ENCODE measurements at regions of chr1 and their contacts with region 1.

Region 1: GRCh38 chr1:211323156-211324063 is 3.2 kb upstream of the TRAF5 start:
- DNase-seq: peak; percentile 65 to 68
- H3K4me3 ChIP-seq: no peak overlapping the region
- H3K4me3 Mint-ChIP-seq: no peak overlapping the region
- H3K27ac Mint-ChIP-seq: no peak overlapping the region
- H3K4me1 ChIP-seq: no peaks in the 10 kb centered on the region; the same call in 1 of the 2 replicates
- H3K4me1 Mint-ChIP-seq: no peaks in the 10 kb centered on the region
- H3K27me3 ChIP-seq: no peaks in the 10 kb centered on the region
- H3K27me3 Mint-ChIP-seq: no peaks in the 10 kb centered on the region
- CTCF ChIP-seq: peak; percentile 73 to 84

Region 2: DNA sequence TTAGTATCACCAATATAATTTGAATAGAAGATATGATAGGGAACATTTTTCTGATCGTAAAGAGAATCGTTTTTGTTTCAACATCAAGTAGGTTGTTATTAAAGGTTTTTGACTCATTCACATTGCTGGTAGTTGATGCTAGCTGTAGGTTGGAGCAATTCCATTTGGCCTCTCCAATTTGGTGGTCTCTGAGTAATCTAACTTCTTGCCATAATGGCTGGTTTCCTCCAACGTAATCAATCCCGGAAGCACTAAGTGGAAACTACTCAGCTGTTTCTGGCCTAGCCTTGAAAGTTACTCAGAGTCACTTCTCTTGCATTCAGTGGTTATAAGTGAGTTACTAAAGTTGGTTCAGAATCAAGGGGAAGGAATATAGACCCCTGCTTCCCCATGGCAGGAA is 38.2 kb before region 1 on chr1:
- CTCF ChIA-PET with region 1: no interaction called
- POLR2A ChIA-PET with region 1: no interaction called
- intact Hi-C with region 1: no loop called
- DNase-seq: no peak
- H3K4me3 ChIP-seq: no peak overlapping the region
- H3K4me3 Mint-ChIP-seq: no peak overlapping the region
- H3K27ac Mint-ChIP-seq: no peak overlapping the region
- H3K4me1 ChIP-seq: no peaks in the 10 kb centered on the region
- H3K4me1 Mint-ChIP-seq: no peaks in the 10 kb centered on the region
- H3K27me3 ChIP-seq: no peaks in the 10 kb centered on the region
- H3K27me3 Mint-ChIP-seq: no peaks in the 10 kb centered on the region
- CTCF ChIP-seq: no peak

Region 3: GRCh38 chr1:211352985-211353515 is 29.6 kb after region 1 on chr1:
- CTCF ChIA-PET with region 1: no interaction called
- POLR2A ChIA-PET with region 1: no interaction called
- intact Hi-C with region 1: loop called (anchors 1 kb)
- DNase-seq: peak; percentile 48 to 72
- H3K4me3 ChIP-seq: no peak overlapping the region
- H3K4me3 Mint-ChIP-seq: no peak overlapping the region
- H3K27ac Mint-ChIP-seq: no peak overlapping the region
- H3K4me1 ChIP-seq: no peaks in the 10 kb centered on the region
- H3K4me1 Mint-ChIP-seq: no peaks in the 10 kb centered on the region
- H3K27me3 ChIP-seq: no peaks in the 10 kb centered on the region
- H3K27me3 Mint-ChIP-seq: no peaks in the 10 kb centered on the region
- CTCF ChIP-seq: peak; percentile 66 to 83

Region 4: GRCh38 chr1:211382714-211383480 is 59.5 kb after region 1 on chr1:
- CTCF ChIA-PET with region 1: interaction called, 4 read pairs
- POLR2A ChIA-PET with region 1: no interaction called
- intact Hi-C with region 1: loop called (anchors 2 kb)
- DNase-seq: peak; percentile 93 to 94
- H3K4me3 ChIP-seq: peak overlapping the region; percentile 58
- H3K4me3 Mint-ChIP-seq: peak overlapping the region; percentile 95
- H3K27ac Mint-ChIP-seq: peak overlapping the region; percentile 100
- H3K4me1 ChIP-seq: no peaks in the 10 kb centered on the region
- H3K4me1 Mint-ChIP-seq: peaks cover 14% of the 10 kb centered on the region
- H3K27me3 ChIP-seq: no peaks in the 10 kb centered on the region
- H3K27me3 Mint-ChIP-seq: no peaks in the 10 kb centered on the region
- CTCF ChIP-seq: no peak

Region 5: GRCh38 chr1:211476200-211476849 is 152.9 kb after region 1 on chr1:
- CTCF ChIA-PET with region 1: interaction called, 6 read pairs
- POLR2A ChIA-PET with region 1: no interaction called
- intact Hi-C with region 1: loop called (anchors 1 kb)
- DNase-seq: peak; percentile 78 to 81
- H3K4me3 ChIP-seq: no peak overlapping the region
- H3K4me3 Mint-ChIP-seq: no peak overlapping the region
- H3K27ac Mint-ChIP-seq: no peak overlapping the region
- H3K4me1 ChIP-seq: no peaks in the 10 kb centered on the region
- H3K4me1 Mint-ChIP-seq: no peaks in the 10 kb centered on the region
- H3K27me3 ChIP-seq: peaks cover 2% of the 10 kb centered on the region; the same call in 1 of the 2 replicates
- H3K27me3 Mint-ChIP-seq: peaks cover 3% of the 10 kb centered on the region
- CTCF ChIP-seq: peak; percentile 77 to 92

Region 6: GRCh38 chr1:211654838-211655787 is 331.7 kb after region 1 on chr1:
- CTCF ChIA-PET with region 1: no interaction called
- POLR2A ChIA-PET with region 1: no interaction called
- intact Hi-C with region 1: loop called (anchors 1 kb)
- DNase-seq: peak; percentile 84 to 89
- H3K4me3 ChIP-seq: no peak overlapping the region
- H3K4me3 Mint-ChIP-seq: no peak overlapping the region
- H3K27ac Mint-ChIP-seq: no peak overlapping the region
- H3K4me1 ChIP-seq: peaks cover 21% of the 10 kb centered on the region
- H3K4me1 Mint-ChIP-seq: peaks cover 22% of the 10 kb centered on the region
- H3K27me3 ChIP-seq: no peaks in the 10 kb centered on the region
- H3K27me3 Mint-ChIP-seq: no peaks in the 10 kb centered on the region
- CTCF ChIP-seq: peak; percentile 90 to 91

Region 7: DNA sequence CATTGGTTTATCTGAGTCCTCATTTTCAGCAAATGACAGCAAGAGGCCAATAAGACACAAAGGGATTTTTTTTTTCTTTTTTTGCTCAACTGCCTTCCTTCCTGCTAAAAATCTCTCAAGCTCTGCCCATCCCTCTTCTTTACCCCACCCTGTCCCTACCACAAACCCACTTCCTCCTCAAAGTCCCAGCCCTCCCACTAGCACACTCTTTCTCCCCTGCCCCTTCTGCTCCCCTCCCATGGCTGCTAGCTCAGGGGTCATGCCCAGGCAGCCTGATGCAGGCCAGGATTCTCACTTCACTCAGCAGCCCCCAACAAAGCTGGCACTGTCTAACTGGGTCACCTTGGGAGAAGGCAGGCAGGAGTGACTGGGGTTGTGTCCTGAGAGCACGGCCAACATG is 933.0 kb after region 1 on chr1:
- CTCF ChIA-PET with region 1: no interaction called
- POLR2A ChIA-PET with region 1: no interaction called
- intact Hi-C with region 1: no loop called
- DNase-seq: no peak
- H3K4me3 ChIP-seq: no peak overlapping the region
- H3K4me3 Mint-ChIP-seq: no peak overlapping the region
- H3K27ac Mint-ChIP-seq: no peak overlapping the region
- H3K4me1 ChIP-seq: peaks cover 24% of the 10 kb centered on the region
- H3K4me1 Mint-ChIP-seq: peaks cover 26% of the 10 kb centered on the region
- H3K27me3 ChIP-seq: no peaks in the 10 kb centered on the region
- H3K27me3 Mint-ChIP-seq: no peaks in the 10 kb centered on the region
- CTCF ChIP-seq: no peak

Measured in Caco-2 (cell line).